Natural killer cell (primary cell): ENCODE measurements at regions of chr5 and their contacts with region 1.

Region 1: GRCh38 chr5:79514391-79515105 is 614 bp upstream of the HOMER1 start:
- DNase-seq: peak; percentile 90 to 98
- ATAC-seq: peak; percentile 78 to 90 (median 82)
- H3K4me3 ChIP-seq: peak overlapping the region; percentile 88
- H3K4me3 Mint-ChIP-seq: peak overlapping the region; percentile 100
- H3K27ac ChIP-seq: peak overlapping the region; percentile 98
- H3K27ac Mint-ChIP-seq: peak overlapping the region; percentile 97 to 99
- H3K4me1 ChIP-seq: peaks cover 15% of the 10 kb centered on the region
- H3K4me1 Mint-ChIP-seq: peaks cover 23 to 25% of the 10 kb centered on the region in 2 donors
- H3K27me3 ChIP-seq: peaks cover 27% of the 10 kb centered on the region
- H3K27me3 Mint-ChIP-seq: peaks cover 24 to 32% of the 10 kb centered on the region in 2 donors
- CTCF ChIP-seq: no peak

Region 2: GRCh38 chr5:80255732-80256479 is 741.4 kb after region 1 on chr5 and contains the start of gene SERINC5:
- intact Hi-C with region 1: loop called (anchors 5 kb)
- DNase-seq: peak; percentile 76 to 91
- ATAC-seq: peak; percentile 87 to 95 (median 88)
- H3K4me3 ChIP-seq: peak within 1 kb of the TSS; percentile 88
- H3K4me3 Mint-ChIP-seq: peak within 1 kb of the TSS; percentile 93
- H3K27ac ChIP-seq: peak within 1 kb of the TSS; percentile 85
- H3K27ac Mint-ChIP-seq: peak within 1 kb of the TSS; percentile 88 to 97
- H3K4me1 ChIP-seq: peaks cover 27% of the 10 kb centered on the region
- H3K4me1 Mint-ChIP-seq: peaks cover 21 to 38% of the 10 kb centered on the region in 2 donors
- H3K27me3 ChIP-seq: no peaks in the 10 kb centered on the region
- H3K27me3 Mint-ChIP-seq: no peaks in the 10 kb centered on the region
- CTCF ChIP-seq: no peak
- total RNA-seq, gene SERINC5: 6.8 to 18.9 (median 14.5) TPM